CD4-positive, alpha-beta memory T cell (primary cell): ENCODE measurements at regions of chr16 and their contacts with region 1.

Region 1: GRCh38 chr16:68040507-68041288 is 17.6 kb downstream of the DUS2 start:
- DNase-seq: peak; percentile 84 to 88 (median 85)
- H3K4me3 ChIP-seq: no peak overlapping the region
- H3K4me3 Mint-ChIP-seq: no peak overlapping the region
- H3K27ac ChIP-seq: no peak overlapping the region
- H3K27ac Mint-ChIP-seq: peak overlapping the region; percentile 29 to 77 (median 44)
- H3K4me1 ChIP-seq: peaks cover 9% of the 10 kb centered on the region
- H3K4me1 Mint-ChIP-seq: peaks cover 6 to 16% (median 12%) of the 10 kb centered on the region in 4 donors
- H3K27me3 ChIP-seq: no peaks in the 10 kb centered on the region
- H3K27me3 Mint-ChIP-seq: no peaks in the 10 kb centered on the region

Region 2: DNA sequence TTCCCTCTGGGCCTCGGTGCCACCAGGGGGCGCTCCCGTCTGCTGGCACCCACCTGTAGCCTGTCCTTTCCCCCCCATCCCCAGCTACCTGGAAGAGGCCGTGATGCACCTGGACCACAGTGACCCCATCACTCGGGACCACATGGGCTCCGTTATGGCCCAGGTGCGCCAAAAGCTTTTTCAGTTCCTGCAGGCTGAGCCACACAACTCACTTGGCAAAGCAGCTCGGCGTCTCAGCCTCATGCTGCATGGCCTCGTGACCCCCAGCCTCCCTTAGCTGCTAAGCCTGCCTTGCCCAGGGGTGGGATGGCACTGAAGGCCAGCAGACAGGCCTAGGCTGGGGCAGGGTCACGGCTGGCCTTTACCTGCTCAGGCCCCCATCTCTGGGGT is 156.8 kb before region 1 on chr16:
- CTCF ChIA-PET with region 1: interaction called, 73 read pairs
- POLR2A ChIA-PET with region 1: interaction called, 3 read pairs
- intact Hi-C with region 1: loop called (anchors 1 kb)
- DNase-seq: peak; percentile 68 to 75 (median 71)
- H3K4me3 ChIP-seq: no peak overlapping the region
- H3K4me3 Mint-ChIP-seq: no peak overlapping the region
- H3K27ac ChIP-seq: no peak overlapping the region
- H3K27ac Mint-ChIP-seq: peak overlapping the region in 4 of 7 donors; percentile 22 to 83 (median 40)
- H3K4me1 ChIP-seq: no peaks in the 10 kb centered on the region
- H3K4me1 Mint-ChIP-seq: peaks cover 0 to 1% (median 0%) of the 10 kb centered on the region in 4 donors
- H3K27me3 ChIP-seq: no peaks in the 10 kb centered on the region
- H3K27me3 Mint-ChIP-seq: no peaks in the 10 kb centered on the region

Region 3: GRCh38 chr16:67902831-67903230 is 137.9 kb before region 1 on chr16:
- CTCF ChIA-PET with region 1: no interaction called
- POLR2A ChIA-PET with region 1: no interaction called
- intact Hi-C with region 1: no loop called
- DNase-seq: no peak
- H3K4me3 ChIP-seq: no peak overlapping the region
- H3K4me3 Mint-ChIP-seq: no peak overlapping the region
- H3K27ac ChIP-seq: no peak overlapping the region
- H3K27ac Mint-ChIP-seq: peak overlapping the region in 3 of 7 donors; percentile 17 to 68 (median 36)
- H3K4me1 ChIP-seq: no peaks in the 10 kb centered on the region
- H3K4me1 Mint-ChIP-seq: peaks cover 3 to 15% (median 9%) of the 10 kb centered on the region in 4 donors
- H3K27me3 ChIP-seq: no peaks in the 10 kb centered on the region
- H3K27me3 Mint-ChIP-seq: no peaks in the 10 kb centered on the region

Region 4: GRCh38 chr16:67979955-67980678 is 60.6 kb before region 1 on chr16 and contains the start of gene DPEP3:
- CTCF ChIA-PET with region 1: interaction called, 10 read pairs
- POLR2A ChIA-PET with region 1: no interaction called
- intact Hi-C with region 1: no loop called
- DNase-seq: no peak
- H3K4me3 ChIP-seq: no peak within 1 kb of the TSS
- H3K4me3 Mint-ChIP-seq: no peak within 1 kb of the TSS
- H3K27ac ChIP-seq: no peak within 1 kb of the TSS
- H3K27ac Mint-ChIP-seq: no peak within 1 kb of the TSS
- H3K4me1 ChIP-seq: peaks cover 23% of the 10 kb centered on the region
- H3K4me1 Mint-ChIP-seq: peaks cover 10 to 27% (median 17%) of the 10 kb centered on the region in 4 donors
- H3K27me3 ChIP-seq: no peaks in the 10 kb centered on the region
- H3K27me3 Mint-ChIP-seq: peaks cover 1 to 3% of the 10 kb centered on the region in 2 donors
- total RNA-seq, gene DPEP3: 0.91 to 1.2 TPM

Region 5: DNA sequence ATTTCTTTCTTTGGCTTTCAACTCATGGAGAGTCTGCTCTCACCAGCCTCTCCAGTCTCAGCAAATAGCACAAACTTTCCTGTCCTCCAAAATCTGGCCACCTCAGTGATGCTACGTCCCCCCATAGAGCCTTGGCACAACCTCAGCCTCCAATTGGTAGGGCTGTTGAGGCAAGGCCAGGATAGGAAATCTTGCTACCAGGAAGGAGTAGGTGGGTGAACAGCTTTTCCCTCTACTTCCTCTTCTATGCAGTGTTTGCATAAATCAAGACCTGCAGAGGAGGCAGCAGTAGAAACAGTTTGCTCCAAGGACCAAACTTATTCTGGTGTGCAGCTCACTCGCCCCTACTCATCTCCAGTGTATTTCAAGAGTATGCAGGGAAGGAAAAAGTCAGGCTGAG is 40.7 kb before region 1 on chr16:
- CTCF ChIA-PET with region 1: interaction called, 45 read pairs
- POLR2A ChIA-PET with region 1: interaction called, 12 read pairs
- intact Hi-C with region 1: no loop called
- DNase-seq: no peak
- H3K4me3 ChIP-seq: peak overlapping the region in 1 of 2 donors; percentile 41
- H3K4me3 Mint-ChIP-seq: peak overlapping the region; percentile 84 to 96 (median 88)
- H3K27ac ChIP-seq: peak overlapping the region; percentile 60
- H3K27ac Mint-ChIP-seq: peak overlapping the region; percentile 84 to 99 (median 95)
- H3K4me1 ChIP-seq: peaks cover 80% of the 10 kb centered on the region
- H3K4me1 Mint-ChIP-seq: peaks cover 36 to 78% (median 54%) of the 10 kb centered on the region in 4 donors
- H3K27me3 ChIP-seq: no peaks in the 10 kb centered on the region
- H3K27me3 Mint-ChIP-seq: no peaks in the 10 kb centered on the region

Region 6: DNA sequence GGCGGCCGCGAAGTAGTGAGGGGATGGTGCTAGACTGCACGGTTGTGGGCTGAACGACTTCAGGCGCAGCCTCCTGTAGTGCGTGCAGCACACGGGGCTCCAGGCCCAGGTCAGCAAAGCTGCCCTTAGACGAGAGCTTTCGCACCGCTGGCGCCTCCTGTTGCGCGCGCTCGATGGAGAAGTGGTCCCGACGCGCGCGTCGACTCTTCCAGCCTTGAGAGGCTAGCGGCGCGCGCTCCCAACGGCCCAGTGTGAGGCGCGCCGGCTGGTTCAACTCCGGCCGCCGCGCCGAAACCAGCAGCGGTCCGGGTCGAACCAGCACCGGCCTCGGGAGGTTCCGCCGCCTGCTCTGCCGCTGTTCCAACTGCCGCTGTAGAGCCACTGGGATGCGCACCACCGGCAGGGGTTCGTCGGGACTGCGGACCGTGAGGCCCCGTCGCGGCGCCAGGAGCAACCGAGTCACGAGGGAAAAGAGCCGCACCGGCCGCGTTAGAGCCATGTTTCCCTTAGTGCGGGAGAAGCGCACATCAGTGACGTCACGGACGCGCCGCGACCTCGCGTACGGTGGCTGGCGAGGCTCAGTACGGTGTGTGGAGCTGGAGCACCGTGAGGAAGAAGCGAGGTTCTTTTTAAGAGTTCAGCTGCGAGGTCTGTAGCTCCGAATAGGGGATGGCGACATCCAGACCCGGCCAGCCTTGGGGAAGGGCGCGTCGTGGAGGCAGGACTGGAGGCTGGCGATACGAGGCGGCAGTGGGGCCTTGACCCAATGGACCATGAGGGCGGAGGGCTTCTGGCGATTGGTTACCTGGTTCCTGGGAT is 17.8 kb before region 1 on chr16 and contains the starts of genes DDX28 and DUS2:
- CTCF ChIA-PET with region 1: interaction called, 18 read pairs
- POLR2A ChIA-PET with region 1: interaction called, 7 read pairs
- intact Hi-C with region 1: no loop called
- DNase-seq: peak; percentile 92 to 95 (median 92)
- H3K4me3 ChIP-seq: peak within 1 kb of the TSS; percentile 57 to 87
- H3K4me3 Mint-ChIP-seq: peak within 1 kb of the TSS; percentile 93 to 100 (median 97)
- H3K27ac ChIP-seq: peak within 1 kb of the TSS; percentile 84
- H3K27ac Mint-ChIP-seq: peak within 1 kb of the TSS; percentile 91 to 100 (median 99)
- H3K4me1 ChIP-seq: peaks cover 30% of the 10 kb centered on the region
- H3K4me1 Mint-ChIP-seq: peaks cover 10 to 37% (median 28%) of the 10 kb centered on the region in 4 donors
- H3K27me3 ChIP-seq: no peaks in the 10 kb centered on the region
- H3K27me3 Mint-ChIP-seq: peaks cover 1 to 2% of the 10 kb centered on the region in 2 donors
- total RNA-seq, gene DDX28: 16.1 to 17.0 TPM
- total RNA-seq, gene DUS2: 13.8 to 14.6 TPM

Region 7: GRCh38 chr16:68064791-68065365 is 24.2 kb after region 1 on chr16:
- CTCF ChIA-PET with region 1: interaction called, 42 read pairs
- POLR2A ChIA-PET with region 1: interaction called, 3 read pairs
- intact Hi-C with region 1: no loop called
- DNase-seq: peak; percentile 60 to 78 (median 68)
- H3K4me3 ChIP-seq: no peak overlapping the region
- H3K4me3 Mint-ChIP-seq: peak overlapping the region in 6 of 8 donors; percentile 1 to 74 (median 34)
- H3K27ac ChIP-seq: peak overlapping the region; percentile 42
- H3K27ac Mint-ChIP-seq: peak overlapping the region; percentile 79 to 96 (median 84)
- H3K4me1 ChIP-seq: peaks cover 79% of the 10 kb centered on the region
- H3K4me1 Mint-ChIP-seq: peaks cover 51 to 90% (median 71%) of the 10 kb centered on the region in 4 donors
- H3K27me3 ChIP-seq: no peaks in the 10 kb centered on the region
- H3K27me3 Mint-ChIP-seq: no peaks in the 10 kb centered on the region

Region 8: GRCh38 chr16:68146585-68146984 is 105.9 kb after region 1 on chr16:
- CTCF ChIA-PET with region 1: no interaction called
- POLR2A ChIA-PET with region 1: no interaction called
- intact Hi-C with region 1: no loop called
- DNase-seq: peak in 2 of 5 donors; percentile 1 to 21
- H3K4me3 ChIP-seq: no peak overlapping the region
- H3K4me3 Mint-ChIP-seq: no peak overlapping the region
- H3K27ac ChIP-seq: no peak overlapping the region
- H3K27ac Mint-ChIP-seq: peak overlapping the region in 4 of 7 donors; percentile 2 to 83 (median 52)
- H3K4me1 ChIP-seq: peaks cover 36% of the 10 kb centered on the region
- H3K4me1 Mint-ChIP-seq: peaks cover 29 to 49% (median 40%) of the 10 kb centered on the region in 4 donors
- H3K27me3 ChIP-seq: no peaks in the 10 kb centered on the region
- H3K27me3 Mint-ChIP-seq: no peaks in the 10 kb centered on the region

Region 9: GRCh38 chr16:68590201-68590994 is 549.7 kb after region 1 on chr16:
- CTCF ChIA-PET with region 1: no interaction called
- POLR2A ChIA-PET with region 1: no interaction called
- intact Hi-C with region 1: no loop called
- DNase-seq: peak; percentile 22 to 42 (median 33)
- H3K4me3 ChIP-seq: no peak overlapping the region
- H3K4me3 Mint-ChIP-seq: peak overlapping the region in 6 of 8 donors; percentile 29 to 73 (median 49)
- H3K27ac ChIP-seq: no peak overlapping the region
- H3K27ac Mint-ChIP-seq: no peak overlapping the region
- H3K4me1 ChIP-seq: no peaks in the 10 kb centered on the region
- H3K4me1 Mint-ChIP-seq: peaks cover 0 to 4% (median 3%) of the 10 kb centered on the region in 4 donors
- H3K27me3 ChIP-seq: no peaks in the 10 kb centered on the region
- H3K27me3 Mint-ChIP-seq: peaks cover 1% of the 10 kb centered on the region in 2 donors